ENCODE measurements at regions of chr1 and their contacts with region 1.

Region 1: DNA sequence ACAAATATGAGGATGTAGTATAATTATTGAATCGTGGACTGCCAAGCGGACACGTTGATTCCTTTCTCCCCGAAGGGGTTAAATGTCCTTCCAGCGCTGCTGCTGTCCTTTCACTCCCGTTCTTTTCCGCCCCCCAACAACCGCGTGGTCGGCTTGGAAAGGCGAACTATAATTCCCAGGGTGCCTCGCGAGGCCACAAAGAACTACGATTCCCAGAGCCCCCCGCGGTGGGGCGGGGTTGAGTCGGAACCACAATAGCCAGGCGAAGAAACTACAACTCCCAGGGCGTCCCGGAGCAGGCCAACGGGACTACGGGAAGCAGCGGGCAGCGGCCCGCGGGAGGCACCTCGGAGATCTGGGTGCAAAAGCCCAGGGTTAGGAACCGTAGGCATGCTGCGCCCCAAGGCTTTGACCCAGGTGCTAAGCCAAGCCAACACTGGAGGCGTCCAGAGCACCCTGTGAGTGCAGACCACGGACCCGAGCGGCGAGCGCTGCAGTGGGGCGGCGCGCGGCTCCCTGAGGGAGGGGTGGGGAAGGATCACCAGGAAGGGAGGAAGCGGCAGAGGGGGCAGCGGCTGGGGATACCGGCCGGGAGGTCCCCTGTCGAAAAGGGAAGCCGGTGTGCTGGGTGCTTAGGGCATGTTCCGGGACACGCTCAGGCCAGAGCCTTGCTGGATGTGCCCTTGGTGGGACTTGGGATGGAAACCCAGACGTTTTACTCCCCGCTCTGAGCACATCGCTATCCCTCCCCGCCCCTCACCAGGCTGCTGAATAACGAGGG is at the start of gene LAMTOR2:
- DNase-seq: peak; percentile 86 to 96 (median 93)
- ATAC-seq: peak; percentile 87
- H3K4me3 ChIP-seq: peak within 1 kb of the TSS; percentile 78
- H3K4me3 Mint-ChIP-seq: peak within 1 kb of the TSS; percentile 92 to 100 (median 96)
- H3K27ac ChIP-seq: peak within 1 kb of the TSS; percentile 82
- H3K27ac Mint-ChIP-seq: peak within 1 kb of the TSS; percentile 85 to 98 (median 91)
- H3K4me1 ChIP-seq: peaks cover 9 to 17% of the 10 kb centered on the region in 2 donors
- H3K4me1 Mint-ChIP-seq: peaks cover 16 to 45% (median 35%) of the 10 kb centered on the region in 7 donors
- H3K27me3 ChIP-seq: no peaks in the 10 kb centered on the region
- H3K27me3 Mint-ChIP-seq: no peaks in the 10 kb centered on the region
- total RNA-seq, gene LAMTOR2: 13.3 to 66.1 (median 27.9) TPM

Region 2: GRCh38 chr1:155172732-155173477 is 881.8 kb before region 1 on chr1 and contains the start of gene KRTCAP2:
- CTCF ChIA-PET with region 1: no interaction called
- POLR2A ChIA-PET with region 1: no interaction called
- intact Hi-C with region 1: loop called in 1 of 2 experiments (anchors 2 kb)
- DNase-seq: peak; percentile 89 to 93 (median 92)
- ATAC-seq: peak; percentile 91
- H3K4me3 ChIP-seq: peak within 1 kb of the TSS; percentile 90
- H3K4me3 Mint-ChIP-seq: peak within 1 kb of the TSS; percentile 94 to 100 (median 98)
- H3K27ac ChIP-seq: peak within 1 kb of the TSS; percentile 88
- H3K27ac Mint-ChIP-seq: peak within 1 kb of the TSS; percentile 95 to 99 (median 98)
- H3K4me1 ChIP-seq: peaks cover 11 to 18% of the 10 kb centered on the region in 2 donors
- H3K4me1 Mint-ChIP-seq: peaks cover 32 to 60% (median 47%) of the 10 kb centered on the region in 7 donors
- H3K27me3 ChIP-seq: no peaks in the 10 kb centered on the region
- H3K27me3 Mint-ChIP-seq: peaks cover 0 to 6% (median 0%) of the 10 kb centered on the region in 5 donors
- total RNA-seq, gene KRTCAP2: 97.4 to 236 (median 155) TPM

Region 3: DNA sequence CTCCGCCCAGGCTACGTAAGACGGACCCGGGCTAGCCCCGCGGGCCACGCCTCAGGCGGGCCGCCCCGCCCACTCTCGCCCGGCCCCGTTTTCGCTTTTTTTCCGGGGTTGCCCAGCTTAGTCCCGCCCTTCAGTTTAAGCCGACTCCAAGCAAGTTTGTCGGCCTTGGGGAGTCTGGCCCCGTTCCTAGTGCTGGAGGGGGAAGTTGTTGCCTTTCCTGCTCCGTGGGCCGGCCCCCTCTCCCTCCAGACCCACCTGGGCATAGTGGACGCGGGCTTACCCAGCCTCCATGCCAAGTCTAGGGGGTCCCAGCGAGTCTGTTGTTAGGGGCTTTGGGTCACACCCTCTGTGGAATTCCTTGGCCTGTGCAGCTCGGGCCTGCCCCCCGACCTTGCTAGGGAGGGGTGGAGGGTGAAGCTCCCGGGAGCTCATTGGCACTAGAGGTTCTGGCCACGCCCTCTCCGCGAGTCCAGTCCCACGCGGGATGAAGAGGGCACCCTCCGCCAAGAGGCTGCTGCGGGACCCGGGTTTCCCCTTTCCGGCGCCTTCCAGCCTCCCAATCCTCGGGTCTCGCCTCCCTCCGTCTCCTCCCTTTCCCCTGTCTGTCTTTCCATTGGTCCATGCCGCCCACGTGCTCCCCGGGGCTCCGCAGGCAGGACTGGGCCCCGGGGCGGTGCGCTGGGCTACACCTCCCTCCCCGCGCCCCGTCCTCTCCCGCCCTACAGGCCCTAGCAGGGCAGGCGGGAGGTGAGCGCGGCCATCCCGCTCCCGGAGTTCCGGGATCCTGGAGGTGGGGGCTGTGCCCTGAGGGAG is 730.7 kb before region 1 on chr1:
- CTCF ChIA-PET with region 1: no interaction called
- POLR2A ChIA-PET with region 1: no interaction called
- intact Hi-C with region 1: loop called in 1 of 2 experiments (anchors 5 kb)
- DNase-seq: peak; percentile 75 to 95 (median 80)
- ATAC-seq: peak; percentile 86
- H3K4me3 ChIP-seq: peak overlapping the region; percentile 100
- H3K4me3 Mint-ChIP-seq: peak overlapping the region; percentile 80 to 91 (median 89)
- H3K27ac ChIP-seq: peak overlapping the region; percentile 90
- H3K27ac Mint-ChIP-seq: peak overlapping the region; percentile 44 to 86 (median 73)
- H3K4me1 ChIP-seq: peaks cover 0 to 12% of the 10 kb centered on the region in 2 donors
- H3K4me1 Mint-ChIP-seq: peaks cover 24 to 38% (median 31%) of the 10 kb centered on the region in 7 donors
- H3K27me3 ChIP-seq: no peaks in the 10 kb centered on the region
- H3K27me3 Mint-ChIP-seq: no peaks in the 10 kb centered on the region

Region 4: GRCh38 chr1:155859234-155859829 is 195.4 kb before region 1 on chr1 and contains the start of gene SYT11:
- CTCF ChIA-PET with region 1: no interaction called
- POLR2A ChIA-PET with region 1: interaction called, 3 read pairs
- intact Hi-C with region 1: loop called (anchors 1 kb)
- DNase-seq: peak; percentile 78 to 93 (median 90)
- ATAC-seq: peak; percentile 90
- H3K4me3 ChIP-seq: peak within 1 kb of the TSS; percentile 62
- H3K4me3 Mint-ChIP-seq: peak within 1 kb of the TSS; percentile 75 to 95 (median 92)
- H3K27ac ChIP-seq: peak within 1 kb of the TSS; percentile 72
- H3K27ac Mint-ChIP-seq: peak within 1 kb of the TSS; percentile 64 to 97 (median 86)
- H3K4me1 ChIP-seq: peaks cover 17 to 25% of the 10 kb centered on the region in 2 donors
- H3K4me1 Mint-ChIP-seq: peaks cover 0 to 51% (median 39%) of the 10 kb centered on the region in 7 donors
- H3K27me3 ChIP-seq: no peaks in the 10 kb centered on the region
- H3K27me3 Mint-ChIP-seq: peaks cover 0 to 24% (median 11%) of the 10 kb centered on the region in 5 donors
- total RNA-seq, gene SYT11: 1.4 to 22.9 (median 2.7) TPM

Region 5: DNA sequence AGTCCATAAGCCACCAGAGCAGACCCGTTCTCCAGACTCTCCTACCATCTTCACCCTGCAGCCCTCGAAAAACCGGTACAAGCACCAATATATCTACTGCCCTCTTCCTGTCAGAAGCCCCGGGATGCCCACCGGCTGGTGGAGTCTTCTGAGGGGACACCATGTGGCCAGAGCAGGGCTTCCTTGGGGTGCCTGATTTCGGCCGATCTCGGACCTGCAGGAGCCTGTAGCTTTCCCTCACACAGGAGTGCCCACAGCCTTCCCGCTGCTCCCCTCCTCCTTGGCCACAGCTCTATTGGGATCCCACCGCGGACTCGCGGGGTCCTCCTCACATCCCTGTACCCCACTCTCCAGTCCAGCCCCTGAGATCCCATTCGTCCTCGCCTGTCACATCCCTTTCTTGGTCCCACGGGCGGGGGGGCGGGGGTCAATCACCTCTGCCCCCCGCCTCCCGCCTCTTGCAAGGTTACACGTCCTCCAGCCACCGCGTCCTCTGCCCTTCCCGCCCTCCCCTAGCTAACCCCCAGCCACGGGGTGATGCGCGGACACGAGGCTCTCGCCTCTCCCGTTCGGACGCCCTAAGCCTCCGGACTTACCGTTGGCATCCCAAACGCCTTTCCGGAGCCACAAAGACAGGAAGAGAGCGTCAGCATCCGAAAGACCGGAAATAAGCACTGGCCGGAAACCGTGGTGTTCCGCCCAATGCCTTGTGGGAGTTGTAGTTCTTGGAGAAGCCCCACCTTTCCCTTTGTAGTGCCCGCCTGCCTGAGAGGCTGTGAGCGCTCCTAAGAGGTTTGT is 34.2 kb before region 1 on chr1 and contains the start of gene SSR2:
- CTCF ChIA-PET with region 1: no interaction called
- POLR2A ChIA-PET with region 1: interaction called, 11 read pairs
- intact Hi-C with region 1: loop called (anchors 1 kb)
- DNase-seq: peak; percentile 44 to 91 (median 84)
- ATAC-seq: peak; percentile 99
- H3K4me3 ChIP-seq: peak within 1 kb of the TSS; percentile 87
- H3K4me3 Mint-ChIP-seq: peak within 1 kb of the TSS; percentile 87 to 99 (median 96)
- H3K27ac ChIP-seq: peak within 1 kb of the TSS; percentile 74
- H3K27ac Mint-ChIP-seq: peak within 1 kb of the TSS; percentile 89 to 99 (median 95)
- H3K4me1 ChIP-seq: peaks cover 4 to 9% of the 10 kb centered on the region in 2 donors
- H3K4me1 Mint-ChIP-seq: peaks cover 20 to 47% (median 41%) of the 10 kb centered on the region in 7 donors
- H3K27me3 ChIP-seq: no peaks in the 10 kb centered on the region
- H3K27me3 Mint-ChIP-seq: peaks cover 0 to 12% (median 0%) of the 10 kb centered on the region in 5 donors
- total RNA-seq, gene SSR2: 207 to 278 (median 256) TPM

Region 6: DNA sequence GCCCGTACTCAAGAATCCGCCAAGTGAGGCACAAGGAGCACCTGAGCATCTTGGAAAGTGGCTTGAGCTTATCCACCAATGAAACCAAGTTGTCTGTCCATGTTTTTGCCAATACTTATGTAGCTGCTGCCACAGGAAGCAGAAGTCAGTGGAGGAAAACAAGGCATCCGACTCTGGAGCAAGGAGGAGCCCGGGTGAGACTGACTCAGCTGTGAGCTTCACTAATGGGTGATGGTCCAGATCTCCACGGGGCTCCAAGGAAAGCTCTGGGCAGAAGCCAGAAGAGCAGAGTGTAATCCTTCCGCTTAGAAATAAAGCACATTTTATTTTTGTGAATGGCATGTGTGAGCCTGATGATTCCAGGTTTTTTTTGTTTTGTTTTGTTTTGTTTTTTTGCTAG is 21.7 kb before region 1 on chr1:
- CTCF ChIA-PET with region 1: no interaction called
- POLR2A ChIA-PET with region 1: no interaction called
- intact Hi-C with region 1: no loop called
- DNase-seq: no peak
- ATAC-seq: no peak
- H3K4me3 ChIP-seq: no peak overlapping the region
- H3K4me3 Mint-ChIP-seq: no peak overlapping the region
- H3K27ac ChIP-seq: no peak overlapping the region
- H3K27ac Mint-ChIP-seq: peak overlapping the region in 1 of 9 donors; percentile 34
- H3K4me1 ChIP-seq: no peaks in the 10 kb centered on the region
- H3K4me1 Mint-ChIP-seq: peaks cover 0 to 4% (median 0%) of the 10 kb centered on the region in 7 donors
- H3K27me3 ChIP-seq: no peaks in the 10 kb centered on the region
- H3K27me3 Mint-ChIP-seq: no peaks in the 10 kb centered on the region

Region 7: DNA sequence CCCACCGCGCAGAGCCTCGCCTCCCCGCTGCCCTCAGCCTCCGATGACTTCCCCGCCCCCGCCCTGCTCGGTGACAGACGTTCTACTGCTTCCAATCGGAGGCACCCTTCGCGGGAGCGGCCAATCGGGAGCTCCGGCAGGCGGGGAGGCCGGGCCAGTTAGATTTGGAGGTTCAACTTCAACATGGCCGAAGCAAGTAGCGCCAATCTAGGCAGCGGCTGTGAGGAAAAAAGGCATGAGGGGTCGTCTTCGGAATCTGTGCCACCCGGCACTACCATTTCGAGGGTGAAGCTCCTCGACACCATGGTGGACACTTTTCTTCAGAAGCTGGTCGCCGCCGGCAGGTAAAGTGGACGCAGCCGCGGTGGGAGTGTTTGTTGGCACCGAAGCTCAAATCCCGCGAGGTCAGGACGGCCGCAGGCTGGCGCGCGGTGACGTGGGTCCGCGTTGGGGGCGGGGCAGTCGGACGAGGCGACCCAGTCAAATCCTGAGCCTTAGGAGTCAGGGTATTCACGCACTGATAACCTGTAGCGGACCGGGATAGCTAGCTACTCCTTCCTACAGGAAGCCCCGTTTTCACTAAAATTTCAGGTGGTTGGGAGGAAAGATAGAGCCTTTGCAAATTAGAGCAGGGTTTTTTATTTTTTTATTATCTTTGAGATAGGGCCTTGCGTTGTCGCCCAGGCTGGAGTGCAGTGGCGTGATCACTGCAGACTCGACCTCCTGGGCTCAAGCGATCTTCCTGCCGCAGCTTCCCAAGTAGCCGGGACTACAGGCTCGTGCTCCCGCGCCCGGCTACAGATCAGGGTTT is 158.3 kb after region 1 on chr1 and contains the start of gene PMF1:
- CTCF ChIA-PET with region 1: no interaction called
- POLR2A ChIA-PET with region 1: no interaction called
- intact Hi-C with region 1: loop called in 1 of 2 experiments (anchors 1 kb)
- DNase-seq: peak; percentile 83 to 97 (median 95)
- ATAC-seq: peak; percentile 98
- H3K4me3 ChIP-seq: peak within 1 kb of the TSS; percentile 85
- H3K4me3 Mint-ChIP-seq: peak within 1 kb of the TSS; percentile 90 to 99 (median 96)
- H3K27ac ChIP-seq: peak within 1 kb of the TSS; percentile 94
- H3K27ac Mint-ChIP-seq: peak within 1 kb of the TSS; percentile 98 to 100 (median 99)
- H3K4me1 ChIP-seq: peaks cover 8 to 17% of the 10 kb centered on the region in 2 donors
- H3K4me1 Mint-ChIP-seq: peaks cover 20 to 58% (median 41%) of the 10 kb centered on the region in 7 donors
- H3K27me3 ChIP-seq: no peaks in the 10 kb centered on the region
- H3K27me3 Mint-ChIP-seq: no peaks in the 10 kb centered on the region
- total RNA-seq, gene PMF1: 42.2 to 76.1 (median 58.2) TPM

Region 8: GRCh38 chr1:156740679-156741612 is 686.3 kb after region 1 on chr1 and contains the start of gene MRPL24:
- CTCF ChIA-PET with region 1: no interaction called
- POLR2A ChIA-PET with region 1: no interaction called
- intact Hi-C with region 1: loop called in 1 of 2 experiments (anchors 2 kb)
- DNase-seq: peak; percentile 84 to 99 (median 98)
- ATAC-seq: peak; percentile 95
- H3K4me3 ChIP-seq: peak within 1 kb of the TSS; percentile 79
- H3K4me3 Mint-ChIP-seq: peak within 1 kb of the TSS; percentile 94 to 99 (median 98)
- H3K27ac ChIP-seq: peak within 1 kb of the TSS; percentile 90
- H3K27ac Mint-ChIP-seq: peak within 1 kb of the TSS; percentile 86 to 99 (median 98)
- H3K4me1 ChIP-seq: peaks cover 17 to 20% of the 10 kb centered on the region in 2 donors
- H3K4me1 Mint-ChIP-seq: peaks cover 23 to 50% (median 40%) of the 10 kb centered on the region in 7 donors
- H3K27me3 ChIP-seq: no peaks in the 10 kb centered on the region
- H3K27me3 Mint-ChIP-seq: no peaks in the 10 kb centered on the region
- total RNA-seq, gene MRPL24: 19.1 to 68.9 (median 47.2) TPM

Measured in naive thymus-derived CD4-positive, alpha-beta T cell (primary cell).